MCF 10A (cell line): ENCODE measurements at regions of chr7 and their contacts with region 1.

Region 1: GRCh38 chr7:20330240-20330927 is at the start of gene ITGB8:
- DNase-seq: peak; percentile 92
- H3K4me3 Mint-ChIP-seq: peak within 1 kb of the TSS; percentile 81
- H3K27ac Mint-ChIP-seq: peak within 1 kb of the TSS; percentile 96
- H3K4me1 Mint-ChIP-seq: peaks cover 11% of the 10 kb centered on the region
- H3K27me3 Mint-ChIP-seq: no peaks in the 10 kb centered on the region
- CTCF ChIP-seq: no peak
- total RNA-seq, gene ITGB8: 25.0 and 38.1 TPM in 2 replicates

Region 2: DNA sequence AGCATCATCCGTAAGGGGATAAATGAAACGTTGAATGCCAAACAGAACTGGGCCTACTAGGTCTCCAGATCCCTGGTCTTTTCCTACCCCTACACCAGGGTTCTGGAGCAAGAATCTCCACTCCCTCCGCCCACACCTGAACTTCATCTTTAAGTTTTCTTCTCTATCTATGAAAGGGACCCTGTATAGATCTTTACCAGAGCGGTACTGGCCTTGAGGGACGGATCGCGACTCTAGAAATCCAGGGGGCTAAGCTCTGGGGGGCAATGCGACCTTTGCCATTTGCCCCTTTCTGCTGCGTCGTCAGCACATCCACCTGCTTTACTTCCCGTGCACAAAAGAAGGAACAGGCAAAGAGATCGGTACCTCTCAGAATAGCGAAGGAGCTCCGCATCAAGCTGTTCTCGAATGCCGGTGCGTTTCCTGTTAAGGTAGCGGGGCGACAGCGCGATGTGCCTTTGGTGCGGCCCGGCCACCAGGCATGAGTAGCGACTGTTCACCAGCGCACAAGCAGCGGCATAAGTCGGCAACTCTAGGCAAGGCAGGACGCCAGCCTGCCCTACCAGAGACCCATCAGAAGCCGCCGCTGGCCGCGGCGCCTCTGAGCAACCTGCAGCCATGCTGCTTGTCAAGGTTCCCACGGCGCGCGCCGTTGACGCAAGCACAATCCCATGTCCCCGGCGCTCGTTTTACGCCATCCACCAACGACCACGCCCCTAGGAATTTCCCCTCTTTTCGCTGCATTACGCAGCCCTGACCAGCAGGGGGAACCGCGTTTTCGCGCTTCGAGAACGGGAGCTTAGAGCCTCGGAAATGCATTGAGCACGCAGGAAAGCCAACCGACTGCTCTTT is 621.8 kb before region 1 on chr7 and contains the start of gene POLR1F:
- CTCF ChIA-PET with region 1: interaction called, 7 read pairs
- POLR2A ChIA-PET with region 1: interaction called, 18 read pairs
- intact Hi-C with region 1: no loop called
- DNase-seq: peak; percentile 96
- H3K4me3 Mint-ChIP-seq: peak within 1 kb of the TSS; percentile 97
- H3K27ac Mint-ChIP-seq: peak within 1 kb of the TSS; percentile 94
- H3K4me1 Mint-ChIP-seq: peaks cover 38% of the 10 kb centered on the region
- H3K27me3 Mint-ChIP-seq: no peaks in the 10 kb centered on the region
- CTCF ChIP-seq: peak; percentile 85
- total RNA-seq, gene POLR1F: 21.4 and 22.8 TPM in 2 replicates

Region 3: DNA sequence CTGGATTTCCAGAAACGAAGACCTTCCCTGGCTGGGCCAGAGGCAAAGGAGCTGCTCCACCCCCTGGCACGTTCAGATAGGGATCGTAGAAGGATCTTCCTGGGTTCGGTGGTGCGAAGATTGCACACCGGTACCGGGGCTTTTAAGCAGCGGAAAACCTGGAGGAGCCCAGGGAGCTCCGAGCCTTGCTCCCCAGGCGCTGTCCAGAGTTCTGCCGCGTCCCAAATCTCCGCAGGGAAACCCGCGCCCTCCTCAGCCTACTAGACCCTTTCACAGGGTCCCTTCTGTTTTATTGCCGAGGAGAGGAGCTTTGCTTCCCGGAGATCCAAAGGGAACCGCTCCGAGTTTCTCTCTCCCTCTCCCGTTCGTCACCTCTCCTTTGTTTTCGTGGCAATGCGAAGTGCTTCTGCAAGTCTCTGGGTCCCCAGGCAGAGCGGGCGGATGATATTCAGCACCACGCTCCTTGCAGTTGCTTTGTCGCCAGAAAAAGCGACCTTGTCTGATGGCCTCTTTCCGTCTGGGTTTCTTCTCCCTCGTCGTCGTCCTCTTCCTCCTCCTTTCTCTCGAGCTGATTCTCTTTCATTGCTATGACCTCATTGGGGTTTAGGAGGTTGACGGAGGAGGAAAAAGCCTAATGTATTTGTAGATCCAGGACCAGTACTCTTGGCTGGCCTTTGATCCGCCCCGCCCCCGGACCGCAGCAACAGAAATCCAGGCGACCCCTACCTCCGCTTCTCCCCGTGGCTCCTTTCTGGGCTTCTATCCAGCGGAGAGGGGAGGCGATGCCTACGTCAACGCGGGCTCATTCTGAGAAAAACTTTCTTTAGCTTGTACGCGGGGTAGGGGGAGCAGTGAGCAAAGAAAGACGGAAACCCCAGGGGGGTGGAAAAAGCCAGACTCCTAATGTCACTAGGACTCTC is 557.3 kb before region 1 on chr7 and contains the start of gene TMEM196:
- CTCF ChIA-PET with region 1: no interaction called
- POLR2A ChIA-PET with region 1: no interaction called
- intact Hi-C with region 1: no loop called
- DNase-seq: no peak
- H3K4me3 Mint-ChIP-seq: peak within 1 kb of the TSS; percentile 47
- H3K27ac Mint-ChIP-seq: no peak within 1 kb of the TSS
- H3K4me1 Mint-ChIP-seq: peaks cover 8% of the 10 kb centered on the region
- H3K27me3 Mint-ChIP-seq: peaks cover 15% of the 10 kb centered on the region
- CTCF ChIP-seq: no peak
- total RNA-seq, gene TMEM196: not detected in 2 replicates

Region 4: GRCh38 chr7:20310963-20311742 is 19.2 kb before region 1 on chr7:
- CTCF ChIA-PET with region 1: interaction called, 20 read pairs
- POLR2A ChIA-PET with region 1: interaction called, 7 read pairs
- intact Hi-C with region 1: no loop called
- DNase-seq: peak; percentile 64
- H3K4me3 Mint-ChIP-seq: no peak overlapping the region
- H3K27ac Mint-ChIP-seq: no peak overlapping the region
- H3K4me1 Mint-ChIP-seq: peaks cover 12% of the 10 kb centered on the region
- H3K27me3 Mint-ChIP-seq: no peaks in the 10 kb centered on the region
- CTCF ChIP-seq: peak; percentile 65

Region 5: DNA sequence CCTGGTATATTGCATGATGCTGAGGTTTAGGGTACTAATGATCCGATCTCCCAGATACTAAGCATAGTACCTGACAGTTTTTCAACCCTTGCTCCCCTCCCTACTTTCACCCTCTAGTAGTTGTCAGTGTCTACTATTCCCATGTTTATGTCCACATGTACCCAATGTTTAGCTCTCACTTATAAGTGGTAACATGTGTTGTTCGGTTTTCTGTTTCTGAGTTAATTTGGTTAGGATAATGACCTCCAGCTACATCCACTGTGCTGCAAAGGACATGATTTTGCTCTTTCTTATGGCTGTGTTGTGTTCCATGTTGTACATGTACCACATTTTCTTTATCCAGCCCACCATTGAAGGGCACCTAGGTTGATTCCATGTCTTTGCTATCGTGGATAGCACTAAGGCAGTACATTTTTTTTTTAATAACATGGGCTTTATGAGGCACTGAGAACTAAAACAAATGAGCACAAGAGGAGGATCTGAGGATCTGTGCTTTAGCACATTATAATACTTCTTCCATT is 28.4 kb after region 1 on chr7:
- CTCF ChIA-PET with region 1: interaction called, 11 read pairs
- POLR2A ChIA-PET with region 1: interaction called, 505 read pairs
- intact Hi-C with region 1: no loop called
- DNase-seq: no peak
- H3K4me3 Mint-ChIP-seq: no peak overlapping the region
- H3K27ac Mint-ChIP-seq: peak overlapping the region; percentile 70
- H3K4me1 Mint-ChIP-seq: peaks cover 51% of the 10 kb centered on the region
- H3K27me3 Mint-ChIP-seq: no peaks in the 10 kb centered on the region
- CTCF ChIP-seq: no peak

Region 6: DNA sequence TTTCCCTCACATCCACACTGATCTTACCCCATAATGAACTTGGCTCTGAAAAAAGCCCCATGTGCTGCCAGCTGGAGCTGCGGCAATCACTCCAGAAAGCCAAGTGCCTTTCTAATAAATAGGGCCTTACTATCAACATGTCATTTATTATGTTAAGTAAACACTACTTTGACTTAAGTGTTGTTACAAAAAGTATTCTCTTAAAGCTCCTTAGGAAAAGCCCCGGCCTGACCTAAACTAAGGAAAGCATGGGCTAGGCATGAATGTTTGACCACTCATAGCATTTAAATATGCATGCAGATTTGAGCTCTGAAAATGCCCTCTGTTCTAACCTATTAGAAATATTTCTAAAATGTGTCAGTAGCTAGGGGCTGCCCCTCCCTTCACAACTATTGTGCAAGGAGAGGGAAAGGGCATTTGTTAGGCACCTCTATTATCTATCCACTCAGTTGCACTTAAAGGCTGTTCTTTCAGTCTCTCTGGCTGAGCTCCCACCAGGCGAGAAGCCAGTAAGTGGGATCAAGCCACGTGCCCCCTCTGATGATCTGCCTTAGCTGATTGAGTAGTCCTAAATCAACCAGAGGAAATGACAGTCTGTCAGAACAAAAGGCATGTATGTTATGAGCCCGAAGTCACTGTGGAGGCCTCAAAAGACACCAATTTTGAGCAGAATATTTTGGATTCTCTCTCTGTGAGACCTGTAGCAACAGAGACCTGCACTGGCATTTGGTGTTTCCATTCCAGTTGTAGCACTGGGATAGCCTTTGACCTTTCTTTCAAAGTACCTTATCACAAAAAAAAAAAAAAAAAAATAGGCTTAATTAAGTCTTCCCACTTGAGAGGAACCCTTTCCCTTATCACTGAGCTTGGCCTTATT is 77.4 kb after region 1 on chr7:
- CTCF ChIA-PET with region 1: interaction called, 4 read pairs
- POLR2A ChIA-PET with region 1: interaction called, 70 read pairs
- intact Hi-C with region 1: loop called (anchors 1 kb)
- DNase-seq: peak; percentile 84
- H3K4me3 Mint-ChIP-seq: peak overlapping the region; percentile 19
- H3K27ac Mint-ChIP-seq: peak overlapping the region; percentile 90
- H3K4me1 Mint-ChIP-seq: peaks cover 23% of the 10 kb centered on the region
- H3K27me3 Mint-ChIP-seq: no peaks in the 10 kb centered on the region
- CTCF ChIP-seq: no peak

Region 7: DNA sequence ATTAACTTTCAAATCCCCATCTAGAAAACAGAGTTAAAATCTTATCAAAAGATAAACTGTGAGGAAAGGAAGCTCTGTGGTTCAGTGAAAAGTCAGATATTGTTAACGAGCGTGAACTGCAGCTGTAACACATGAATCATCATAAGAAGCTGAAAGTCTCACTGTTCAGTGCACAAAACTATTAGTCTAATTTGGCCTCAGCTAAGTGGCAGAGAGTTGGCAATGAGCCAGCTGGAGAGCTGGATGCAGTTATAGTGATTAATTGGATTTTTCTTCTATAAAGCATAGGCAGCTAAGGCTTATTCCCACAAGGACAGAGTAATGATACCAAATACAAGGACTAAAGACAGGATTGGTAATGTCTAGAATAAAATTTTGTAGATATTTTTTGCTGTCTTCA is 184.0 kb after region 1 on chr7:
- CTCF ChIA-PET with region 1: no interaction called
- POLR2A ChIA-PET with region 1: interaction called, 10 read pairs
- intact Hi-C with region 1: loop called (anchors 10 kb)
- DNase-seq: peak; percentile 79
- H3K4me3 Mint-ChIP-seq: no peak overlapping the region
- H3K27ac Mint-ChIP-seq: no peak overlapping the region
- H3K4me1 Mint-ChIP-seq: no peaks in the 10 kb centered on the region
- H3K27me3 Mint-ChIP-seq: no peaks in the 10 kb centered on the region
- CTCF ChIP-seq: no peak